Esophagus muscularis mucosa (tissue), 4 donors: ENCODE measurements at regions of chr3 and their contacts with region 1.

Region 1: DNA sequence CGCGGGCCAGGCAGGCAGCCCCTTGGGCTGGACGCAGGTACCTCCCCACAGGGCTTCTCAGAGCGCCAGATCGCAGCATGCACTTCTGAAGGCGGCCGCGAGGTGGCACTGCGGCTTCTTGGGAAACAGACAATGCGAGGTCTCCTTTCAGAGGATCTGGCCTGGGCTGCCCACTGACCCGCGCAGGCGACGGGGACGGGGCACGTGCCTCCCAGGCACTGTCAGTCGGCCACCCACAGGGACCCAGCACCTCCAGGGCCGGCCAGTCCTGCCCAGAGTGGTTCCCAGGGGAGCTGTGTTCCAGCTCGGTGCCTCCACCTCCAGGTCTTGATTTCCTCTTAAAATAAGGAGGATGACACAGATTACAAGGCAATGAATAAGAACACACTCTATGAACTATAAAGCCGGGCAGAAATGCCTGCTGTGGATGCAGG is 24.4 kb upstream of the TXNRD3 start:
- DNase-seq: peak; percentile 96
- H3K4me3 ChIP-seq: peak overlapping the region in 1 of 4 donors; percentile 6
- H3K27ac ChIP-seq: no peak overlapping the region
- H3K4me1 ChIP-seq: peaks cover 5 to 9% (median 7%) of the 10 kb centered on the region in 4 donors
- H3K27me3 ChIP-seq: peaks cover 0 to 15% (median 0%) of the 10 kb centered on the region in 4 donors
- CTCF ChIP-seq: peak in 2 of 3 experiments; percentile 89 to 97
- EP300 ChIP-seq: no peak
- POLR2A ChIP-seq: no peak

Region 2: DNA sequence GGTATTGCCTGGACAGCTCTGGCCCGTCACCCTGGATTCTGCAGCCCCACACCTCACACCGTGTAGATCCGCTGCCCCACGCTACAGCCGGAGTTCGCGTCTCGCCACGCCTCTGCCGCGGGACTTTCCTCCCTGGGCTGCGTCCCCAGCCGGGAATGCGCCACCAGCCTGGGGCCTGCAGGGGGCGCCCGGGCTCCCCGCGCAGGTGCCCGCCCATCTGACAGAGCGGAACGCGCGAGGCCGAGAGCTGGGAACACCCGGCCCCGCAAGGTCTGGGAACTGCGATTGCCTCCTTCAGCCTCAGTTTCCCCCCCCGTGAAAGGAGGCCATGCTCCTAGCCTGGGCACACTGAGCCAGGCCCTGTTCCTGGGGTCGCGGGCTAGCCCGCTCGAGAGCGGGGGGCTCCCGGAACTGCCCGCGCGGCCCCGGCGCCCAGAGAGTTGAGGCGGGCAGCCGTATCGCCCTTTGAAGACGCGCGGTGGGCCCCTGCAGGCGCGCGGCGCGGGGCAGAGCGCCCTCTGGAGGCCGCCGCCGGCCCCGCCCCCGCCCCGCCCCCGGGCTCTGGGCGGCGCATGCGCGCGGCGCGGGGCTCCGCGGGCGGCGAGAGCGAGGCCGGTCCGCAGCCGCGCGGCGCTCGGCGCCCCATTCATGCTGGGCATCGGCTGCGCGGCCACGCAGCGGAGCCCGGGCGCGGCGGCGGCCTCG is 303.3 kb after region 1 on chr3 and contains the start of gene PLXNA1:
- intact Hi-C with region 1: loop called (anchors 10 kb)
- DNase-seq: no peak
- H3K4me3 ChIP-seq: peak within 1 kb of the TSS; percentile 68 to 92 (median 84)
- H3K27ac ChIP-seq: peak within 1 kb of the TSS; percentile 76 to 85 (median 80)
- H3K4me1 ChIP-seq: peaks cover 24 to 52% (median 44%) of the 10 kb centered on the region in 4 donors
- H3K27me3 ChIP-seq: peaks cover 0 to 13% (median 0%) of the 10 kb centered on the region in 4 donors
- CTCF ChIP-seq: peak; percentile 83 to 91 (median 85)
- EP300 ChIP-seq: no peak
- POLR2A ChIP-seq: no peak
- total RNA-seq, gene PLXNA1: 33.6 to 82.4 (median 47.0) TPM

Region 3: GRCh38 chr3:127455541-127456450 is 776.5 kb after region 1 on chr3:
- intact Hi-C with region 1: loop called (anchors 2 kb)
- DNase-seq: no peak
- H3K4me3 ChIP-seq: peak overlapping the region; percentile 35 to 43 (median 38)
- H3K27ac ChIP-seq: no peak overlapping the region
- H3K4me1 ChIP-seq: peaks cover 18 to 26% (median 25%) of the 10 kb centered on the region in 4 donors
- H3K27me3 ChIP-seq: peaks cover 0 to 84% (median 53%) of the 10 kb centered on the region in 4 donors
- CTCF ChIP-seq: peak; percentile 84 to 93 (median 89)
- EP300 ChIP-seq: no peak
- POLR2A ChIP-seq: no peak

Region 4: GRCh38 chr3:127544192-127544802 is 865.0 kb after region 1 on chr3:
- intact Hi-C with region 1: loop called (anchors 5 kb)
- DNase-seq: no peak
- H3K4me3 ChIP-seq: no peak overlapping the region
- H3K27ac ChIP-seq: no peak overlapping the region
- H3K4me1 ChIP-seq: peaks cover 18 to 33% (median 23%) of the 10 kb centered on the region in 4 donors
- H3K27me3 ChIP-seq: no peaks in the 10 kb centered on the region
- CTCF ChIP-seq: peak; percentile 68 to 84 (median 76)
- EP300 ChIP-seq: no peak
- POLR2A ChIP-seq: no peak